ENCODE measurements at regions of chrX and their contacts with region 1.

Region 1: GRCh38 chrX:141220344-141221035 is 21.8 kb downstream of the SPANXC start:
- DNase-seq: peak; percentile 92
- ATAC-seq: peak; percentile 72
- H3K4me3 ChIP-seq: no peak overlapping the region; the same call in 1 of the 2 replicates
- H3K27ac ChIP-seq: peak overlapping the region; percentile 93
- H3K4me1 ChIP-seq: peaks cover 34% of the 10 kb centered on the region
- H3K27me3 ChIP-seq: no peaks in the 10 kb centered on the region
- CTCF ChIP-seq: no peak

Region 2: GRCh38 chrX:141176586-141177451 is 43.7 kb before region 1 on chrX and contains the start of gene LDOC1:
- CTCF ChIA-PET with region 1: no interaction called
- POLR2A ChIA-PET with region 1: interaction called, 4 read pairs
- intact Hi-C with region 1: loop called (anchors 2 kb)
- DNase-seq: peak; percentile 89
- ATAC-seq: peak; percentile 79
- H3K4me3 ChIP-seq: peak within 1 kb of the TSS; percentile 99
- H3K27ac ChIP-seq: peak within 1 kb of the TSS; percentile 40
- H3K4me1 ChIP-seq: peaks cover 14% of the 10 kb centered on the region; the same call in 1 of the 2 replicates
- H3K27me3 ChIP-seq: no peaks in the 10 kb centered on the region
- CTCF ChIP-seq: no peak
- total RNA-seq, gene LDOC1: 40.6 and 45.5 TPM in 2 replicates

Region 3: DNA sequence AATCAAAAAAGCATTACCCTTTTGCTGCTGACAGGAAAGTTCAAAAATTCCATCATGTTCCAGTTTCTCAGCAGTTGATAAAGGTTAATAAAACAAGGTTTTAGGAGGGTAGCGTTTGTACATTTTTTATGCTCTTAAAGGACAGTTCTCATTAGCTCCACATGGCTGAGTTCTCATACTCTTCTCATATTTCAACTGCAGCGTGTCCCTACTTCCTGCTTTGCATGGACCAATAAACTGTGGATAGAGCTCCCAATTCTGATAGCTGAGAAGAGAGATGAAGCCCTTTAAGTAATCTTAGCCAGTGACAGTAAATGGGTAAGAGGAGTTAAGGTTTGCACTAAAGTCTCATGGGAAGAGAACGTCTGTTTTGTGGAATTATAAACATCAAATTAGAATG is 422.5 kb after region 1 on chrX:
- CTCF ChIA-PET with region 1: no interaction called
- POLR2A ChIA-PET with region 1: no interaction called
- intact Hi-C with region 1: loop called (anchors 5 kb)
- DNase-seq: peak; percentile 56
- ATAC-seq: peak; percentile 67
- H3K4me3 ChIP-seq: no peak overlapping the region
- H3K27ac ChIP-seq: no peak overlapping the region
- H3K4me1 ChIP-seq: peaks cover 23% of the 10 kb centered on the region
- H3K27me3 ChIP-seq: no peaks in the 10 kb centered on the region
- CTCF ChIP-seq: no peak